A549 (cell line): ENCODE measurements at regions of chr5 and their contacts with region 1.

Region 1: GRCh38 chr5:7927466-7928375 is 58.8 kb downstream of the MTRR start:
- DNase-seq: peak; percentile 45 to 60
- ATAC-seq: peak; percentile 82 to 97
- H3K4me3 ChIP-seq: no peak overlapping the region
- H3K27ac ChIP-seq: no peak overlapping the region
- H3K4me1 ChIP-seq: no peaks in the 10 kb centered on the region
- CTCF ChIP-seq: peak; percentile 78
- EP300 ChIP-seq: no peak
- POLR2A ChIP-seq: no peak
- RAD21 ChIP-seq: peak; percentile 83 to 89

Region 2: GRCh38 chr5:7271403-7272119 is 656.2 kb before region 1 on chr5:
- CTCF ChIA-PET with region 1: no interaction called
- POLR2A ChIA-PET with region 1: no interaction called
- DNase-seq: no peak
- ATAC-seq: no peak
- H3K4me3 ChIP-seq: no peak overlapping the region
- H3K27ac ChIP-seq: no peak overlapping the region
- H3K4me1 ChIP-seq: no peaks in the 10 kb centered on the region
- CTCF ChIP-seq: no peak
- EP300 ChIP-seq: no peak
- POLR2A ChIP-seq: no peak
- RAD21 ChIP-seq: no peak

Region 3: GRCh38 chr5:7728076-7728475 is 199.6 kb before region 1 on chr5:
- CTCF ChIA-PET with region 1: no interaction called
- POLR2A ChIA-PET with region 1: no interaction called
- DNase-seq: no peak
- ATAC-seq: no peak
- H3K4me3 ChIP-seq: no peak overlapping the region
- H3K27ac ChIP-seq: no peak overlapping the region
- H3K4me1 ChIP-seq: no peaks in the 10 kb centered on the region
- CTCF ChIP-seq: no peak
- EP300 ChIP-seq: no peak
- POLR2A ChIP-seq: no peak
- RAD21 ChIP-seq: no peak

Region 4: GRCh38 chr5:7886849-7887475 is 40.8 kb before region 1 on chr5:
- CTCF ChIA-PET with region 1: interaction called, 15 read pairs
- POLR2A ChIA-PET with region 1: no interaction called
- DNase-seq: peak; percentile 40 to 50
- ATAC-seq: peak; percentile 66 to 77; a peak in 4 of 6 replicates
- H3K4me3 ChIP-seq: no peak overlapping the region
- H3K27ac ChIP-seq: peak overlapping the region; percentile 30 to 42; a peak in 2 of 6 replicates
- H3K4me1 ChIP-seq: peaks cover 3% of the 10 kb centered on the region; the same call in 1 of the 3 replicates
- CTCF ChIP-seq: peak; percentile 66
- EP300 ChIP-seq: no peak
- POLR2A ChIP-seq: no peak
- RAD21 ChIP-seq: peak; percentile 46 to 69

Region 5: DNA sequence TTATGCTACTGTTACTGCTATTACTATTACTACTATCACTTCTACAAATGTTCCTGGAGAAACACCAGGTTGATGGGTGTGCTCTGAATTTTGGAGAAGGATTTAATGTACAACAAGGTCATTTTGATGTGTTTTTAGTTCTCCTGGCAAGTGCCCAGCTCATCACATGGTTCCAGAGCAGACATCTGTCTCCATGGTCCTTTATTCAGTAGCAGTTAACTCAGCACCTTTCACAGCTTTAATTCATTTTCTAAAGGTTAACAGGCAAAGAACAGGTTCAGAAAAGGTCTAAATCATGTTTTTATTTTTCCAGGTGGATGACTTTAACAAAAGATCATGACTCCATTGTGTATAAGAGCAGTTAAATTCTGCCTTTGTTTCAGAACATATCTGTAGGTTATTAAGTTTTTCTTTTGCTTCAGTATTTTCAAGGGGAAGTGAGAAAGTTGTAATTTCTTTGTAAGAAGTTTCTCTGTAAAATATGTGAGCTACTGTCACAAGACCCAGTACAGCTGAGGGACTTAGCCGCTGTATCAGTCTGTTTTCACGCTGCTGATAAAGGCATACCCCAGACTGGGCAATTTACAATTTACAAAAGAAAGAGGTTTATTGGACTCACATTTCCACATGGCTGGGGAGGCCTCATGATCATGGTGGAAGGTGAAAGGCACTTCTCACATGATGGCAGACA is 16.8 kb before region 1 on chr5:
- CTCF ChIA-PET with region 1: interaction called, 21 read pairs
- POLR2A ChIA-PET with region 1: no interaction called
- DNase-seq: no peak
- ATAC-seq: no peak
- H3K4me3 ChIP-seq: no peak overlapping the region
- H3K27ac ChIP-seq: no peak overlapping the region
- H3K4me1 ChIP-seq: no peaks in the 10 kb centered on the region
- CTCF ChIP-seq: no peak
- EP300 ChIP-seq: no peak
- POLR2A ChIP-seq: no peak
- RAD21 ChIP-seq: no peak

Region 6: DNA sequence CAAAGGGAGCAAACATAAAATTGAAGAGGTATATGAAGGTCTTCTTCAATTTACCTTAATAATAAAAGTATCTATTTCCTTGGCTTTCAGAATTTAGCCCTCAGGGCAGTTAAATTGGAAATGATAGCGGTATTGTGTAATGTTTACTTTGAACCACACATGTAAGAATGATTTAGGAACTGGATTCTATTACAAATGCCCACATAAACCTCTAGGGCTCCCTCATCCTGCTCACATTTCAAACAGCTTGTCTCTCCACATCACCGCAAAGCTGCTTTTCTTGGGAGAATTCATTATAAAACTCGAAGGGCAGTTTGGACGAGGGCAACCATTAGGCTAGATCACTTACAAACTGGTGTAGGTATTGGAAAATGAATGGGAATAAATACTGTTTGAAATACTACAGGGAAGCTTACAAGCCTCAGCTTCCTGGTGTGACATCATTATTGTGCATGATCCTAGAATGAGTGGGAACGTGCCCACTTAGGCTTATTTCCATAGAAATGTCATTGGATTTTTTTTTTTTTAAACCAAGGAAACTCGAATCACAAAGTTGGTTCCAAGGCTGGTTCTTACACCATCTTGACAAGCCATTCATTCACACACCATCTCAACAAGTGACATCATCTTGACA is 11.4 kb before region 1 on chr5:
- CTCF ChIA-PET with region 1: interaction called, 21 read pairs
- POLR2A ChIA-PET with region 1: no interaction called
- DNase-seq: no peak
- ATAC-seq: no peak
- H3K4me3 ChIP-seq: no peak overlapping the region
- H3K27ac ChIP-seq: no peak overlapping the region
- H3K4me1 ChIP-seq: no peaks in the 10 kb centered on the region
- CTCF ChIP-seq: no peak
- EP300 ChIP-seq: no peak
- POLR2A ChIP-seq: no peak
- RAD21 ChIP-seq: no peak

Region 7: DNA sequence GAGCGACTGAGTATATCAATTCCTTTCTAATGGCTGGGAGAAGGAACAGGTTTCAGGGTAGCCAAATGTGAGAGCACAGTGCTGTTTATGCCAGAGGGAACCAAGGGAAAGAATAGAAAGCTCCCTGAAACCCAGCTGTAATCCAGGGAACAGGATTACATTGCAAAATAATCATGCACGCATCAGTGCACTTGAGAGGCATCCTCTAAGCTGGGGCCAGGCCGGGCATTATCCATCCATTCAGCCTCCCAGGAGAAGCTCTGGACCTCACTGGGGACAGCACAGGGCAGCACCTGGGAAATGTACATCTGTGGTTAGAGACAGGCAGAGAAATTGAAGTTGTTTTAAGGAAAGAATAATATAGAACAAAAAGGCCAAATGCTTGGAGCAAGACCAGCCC is 14.0 kb after region 1 on chr5:
- CTCF ChIA-PET with region 1: interaction called, 47 read pairs
- POLR2A ChIA-PET with region 1: no interaction called
- DNase-seq: no peak
- ATAC-seq: no peak
- H3K4me3 ChIP-seq: no peak overlapping the region
- H3K27ac ChIP-seq: no peak overlapping the region
- H3K4me1 ChIP-seq: no peaks in the 10 kb centered on the region
- CTCF ChIP-seq: no peak
- EP300 ChIP-seq: no peak
- POLR2A ChIP-seq: no peak
- RAD21 ChIP-seq: no peak

Region 8: DNA sequence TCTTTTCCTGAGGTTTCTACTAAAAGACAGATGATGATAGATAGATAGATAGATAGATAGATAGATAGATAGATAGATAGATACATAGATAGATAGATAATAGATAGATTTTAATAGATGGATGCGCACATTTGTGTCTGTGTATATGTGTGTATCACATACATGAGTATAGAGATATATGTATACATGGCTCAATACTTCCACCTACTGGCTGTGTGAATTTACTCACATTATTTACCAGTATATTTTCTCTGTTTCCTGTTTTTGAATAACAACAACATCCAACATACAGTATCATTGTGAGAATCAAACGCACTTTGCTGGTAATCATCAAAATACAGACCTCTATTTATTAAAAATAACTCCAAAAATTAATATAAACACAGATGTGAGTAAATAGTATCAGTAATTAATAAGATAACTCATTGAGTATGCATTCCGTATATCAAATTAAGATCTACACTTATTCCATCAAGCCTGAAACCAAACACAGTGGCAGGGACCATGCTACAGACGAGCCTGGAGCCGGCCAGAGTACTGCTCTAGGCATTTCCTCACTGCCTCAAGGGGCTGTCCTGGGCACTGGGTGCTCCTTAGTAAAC is 1280.2 kb after region 1 on chr5:
- CTCF ChIA-PET with region 1: interaction called, 29 read pairs
- POLR2A ChIA-PET with region 1: no interaction called
- DNase-seq: peak; percentile 25 to 52
- ATAC-seq: peak; percentile 68 to 85; a peak in 4 of 6 replicates
- H3K4me3 ChIP-seq: no peak overlapping the region
- H3K27ac ChIP-seq: no peak overlapping the region
- H3K4me1 ChIP-seq: no peaks in the 10 kb centered on the region
- CTCF ChIP-seq: peak; percentile 59
- EP300 ChIP-seq: no peak
- POLR2A ChIP-seq: no peak
- RAD21 ChIP-seq: peak; percentile 70 to 77